ENCODE measurements at regions of chr5 and their contacts with region 1.

Region 1: GRCh38 chr5:112995764-112996618 is 19.4 kb downstream of the DCP2 start:
- DNase-seq: peak; percentile 59 to 85 (median 74)
- ATAC-seq: peak; percentile 80 to 84
- H3K4me3 ChIP-seq: no peak overlapping the region
- H3K27ac ChIP-seq: no peak overlapping the region
- H3K4me1 ChIP-seq: no peaks in the 10 kb centered on the region
- H3K27me3 ChIP-seq: no peaks in the 10 kb centered on the region

Region 2: GRCh38 chr5:113204525-113205161 is 208.7 kb after region 1 on chr5:
- intact Hi-C with region 1: loop called in 1 of 4 experiments (anchors 10 kb)
- DNase-seq: peak; percentile 63 to 77 (median 76)
- ATAC-seq: peak; percentile 46 to 63
- H3K4me3 ChIP-seq: no peak overlapping the region
- H3K27ac ChIP-seq: no peak overlapping the region
- H3K4me1 ChIP-seq: peaks cover 13% of the 10 kb centered on the region
- H3K27me3 ChIP-seq: no peaks in the 10 kb centered on the region

Region 3: GRCh38 chr5:113330533-113331208 is 334.7 kb after region 1 on chr5:
- intact Hi-C with region 1: loop called in 2 of 4 experiments (anchors 10 kb)
- DNase-seq: peak; percentile 49 to 76 (median 57)
- ATAC-seq: peak; percentile 64 to 77
- H3K4me3 ChIP-seq: no peak overlapping the region
- H3K27ac ChIP-seq: no peak overlapping the region
- H3K4me1 ChIP-seq: no peaks in the 10 kb centered on the region
- H3K27me3 ChIP-seq: no peaks in the 10 kb centered on the region

Region 4: DNA sequence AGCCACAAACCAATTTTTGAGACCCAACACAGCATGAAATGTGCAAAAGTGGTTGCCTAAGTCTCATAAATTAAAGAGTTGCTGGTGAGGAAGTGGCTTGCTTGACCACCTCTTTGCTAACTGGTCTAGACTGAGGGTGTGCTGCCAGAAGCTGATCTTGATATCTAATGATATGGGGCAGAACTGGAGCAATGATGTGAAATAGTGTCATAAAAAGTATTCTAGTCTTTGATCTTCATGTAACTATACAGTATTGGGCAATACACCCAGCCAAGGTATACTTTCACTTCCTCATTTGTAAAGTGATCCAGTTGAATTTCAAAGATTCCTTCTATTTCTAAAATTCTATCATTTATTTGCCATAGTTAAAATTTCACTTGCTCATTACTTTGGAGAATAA is 511.6 kb after region 1 on chr5:
- intact Hi-C with region 1: loop called in 3 of 4 experiments (anchors 5 to 10 kb)
- DNase-seq: no peak
- ATAC-seq: no peak
- H3K4me3 ChIP-seq: no peak overlapping the region
- H3K27ac ChIP-seq: no peak overlapping the region
- H3K4me1 ChIP-seq: no peaks in the 10 kb centered on the region
- H3K27me3 ChIP-seq: no peaks in the 10 kb centered on the region

Region 5: DNA sequence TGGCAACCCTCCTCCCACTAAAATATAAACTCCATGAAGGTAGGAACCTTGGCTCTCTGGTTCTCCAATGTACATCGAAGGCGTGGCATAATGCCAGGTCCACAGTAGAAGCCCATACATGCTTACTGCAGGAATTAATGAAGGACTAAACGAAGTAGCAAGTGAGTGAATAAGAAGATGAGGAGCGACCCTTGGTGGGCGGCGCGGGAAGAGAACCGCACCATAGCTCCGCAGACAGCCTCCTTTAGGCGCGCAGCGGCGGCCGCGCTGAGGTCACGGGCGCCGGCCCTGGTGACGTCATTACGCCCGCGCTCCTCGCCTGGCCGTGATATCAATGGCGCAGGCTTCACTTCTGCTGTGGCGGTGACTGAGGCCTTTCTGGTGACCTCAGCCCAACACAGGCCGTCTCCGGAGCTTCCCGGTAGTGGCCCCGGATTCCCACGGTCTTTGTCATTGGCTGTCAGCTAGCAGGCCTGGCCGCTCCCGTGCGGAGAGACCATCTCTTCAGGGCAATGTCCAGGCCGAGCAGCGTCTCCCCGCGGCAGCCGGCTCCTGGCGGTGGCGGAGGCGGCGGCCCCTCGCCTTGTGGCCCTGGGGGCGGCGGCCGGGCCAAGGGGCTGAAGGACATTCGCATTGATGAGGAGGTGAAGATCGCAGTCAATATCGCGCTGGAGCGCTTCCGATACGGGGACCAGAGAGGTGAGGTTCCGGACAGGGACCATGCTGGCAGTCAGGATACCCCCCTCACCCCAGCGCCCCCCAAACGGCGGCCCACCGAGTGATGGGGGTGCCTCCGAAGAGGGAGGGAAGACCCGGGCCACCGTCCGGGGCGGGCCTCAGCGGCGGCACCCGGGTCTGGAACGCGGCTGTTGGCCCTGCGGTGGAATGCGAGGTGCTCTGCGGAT is 517.6 kb after region 1 on chr5 and contains the start of gene YTHDC2:
- intact Hi-C with region 1: loop called in 3 of 4 experiments (anchors 5 to 10 kb)
- DNase-seq: peak; percentile 91 to 96 (median 95)
- ATAC-seq: peak; percentile 99
- H3K4me3 ChIP-seq: peak within 1 kb of the TSS; percentile 75
- H3K27ac ChIP-seq: peak within 1 kb of the TSS; percentile 91
- H3K4me1 ChIP-seq: no peaks in the 10 kb centered on the region
- H3K27me3 ChIP-seq: no peaks in the 10 kb centered on the region
- total RNA-seq, gene YTHDC2: 12.3 to 21.1 (median 18.5) TPM

Region 6: GRCh38 chr5:113606298-113607134 is 610.5 kb after region 1 on chr5:
- intact Hi-C with region 1: loop called in 1 of 4 experiments (anchors 5 kb)
- DNase-seq: peak; percentile 35 to 73 (median 57)
- ATAC-seq: peak; percentile 94 to 95
- H3K4me3 ChIP-seq: peak overlapping the region; percentile 18
- H3K27ac ChIP-seq: no peak overlapping the region
- H3K4me1 ChIP-seq: no peaks in the 10 kb centered on the region
- H3K27me3 ChIP-seq: no peaks in the 10 kb centered on the region

Measured in right cardiac atrium (tissue), 5 donors.